ENCODE measurements at regions of chr18 and their contacts with region 1.

Region 1: GRCh38 chr18:9961041-9961440 is 47.2 kb downstream of the VAPA start:
- DNase-seq: no peak
- H3K4me3 ChIP-seq: no peak overlapping the region
- H3K4me3 Mint-ChIP-seq: no peak overlapping the region
- H3K27ac ChIP-seq: no peak overlapping the region
- H3K27ac Mint-ChIP-seq: no peak overlapping the region
- H3K4me1 ChIP-seq: peaks cover 4% of the 10 kb centered on the region in 2 donors
- H3K4me1 Mint-ChIP-seq: peaks cover 10% of the 10 kb centered on the region
- H3K27me3 ChIP-seq: peaks cover 0 to 7% of the 10 kb centered on the region in 2 donors
- H3K27me3 Mint-ChIP-seq: peaks cover 7 to 11% (median 10%) of the 10 kb centered on the region in 3 donors
- CTCF ChIP-seq: no peak

Region 2: GRCh38 chr18:9914584-9915290 is 46.3 kb before region 1 on chr18:
- intact Hi-C with region 1: no loop called
- DNase-seq: peak; percentile 81 to 94 (median 87)
- H3K4me3 ChIP-seq: peak overlapping the region; percentile 87 to 98 (median 95)
- H3K4me3 Mint-ChIP-seq: peak overlapping the region; percentile 83 to 90
- H3K27ac ChIP-seq: peak overlapping the region; percentile 80 to 97
- H3K27ac Mint-ChIP-seq: peak overlapping the region; percentile 84 to 93 (median 92)
- H3K4me1 ChIP-seq: peaks cover 41 to 71% of the 10 kb centered on the region in 2 donors
- H3K4me1 Mint-ChIP-seq: peaks cover 39% of the 10 kb centered on the region
- H3K27me3 ChIP-seq: no peaks in the 10 kb centered on the region
- H3K27me3 Mint-ChIP-seq: no peaks in the 10 kb centered on the region
- CTCF ChIP-seq: no peak

Region 3: GRCh38 chr18:10153924-10154752 is 193.1 kb after region 1 on chr18:
- intact Hi-C with region 1: no loop called
- DNase-seq: no peak
- H3K4me3 ChIP-seq: no peak overlapping the region
- H3K4me3 Mint-ChIP-seq: no peak overlapping the region
- H3K27ac ChIP-seq: no peak overlapping the region
- H3K27ac Mint-ChIP-seq: no peak overlapping the region
- H3K4me1 ChIP-seq: no peaks in the 10 kb centered on the region
- H3K4me1 Mint-ChIP-seq: peaks cover 11% of the 10 kb centered on the region
- H3K27me3 ChIP-seq: no peaks in the 10 kb centered on the region
- H3K27me3 Mint-ChIP-seq: peaks cover 0 to 1% (median 1%) of the 10 kb centered on the region in 3 donors
- CTCF ChIP-seq: no peak

Region 4: GRCh38 chr18:11040823-11041656 is 1080.0 kb after region 1 on chr18:
- intact Hi-C with region 1: loop called in 1 of 2 experiments (anchors 10 kb)
- DNase-seq: peak; percentile 2 to 33 (median 31)
- H3K4me3 ChIP-seq: no peak overlapping the region
- H3K4me3 Mint-ChIP-seq: no peak overlapping the region
- H3K27ac ChIP-seq: no peak overlapping the region
- H3K27ac Mint-ChIP-seq: no peak overlapping the region
- H3K4me1 ChIP-seq: no peaks in the 10 kb centered on the region
- H3K4me1 Mint-ChIP-seq: no peaks in the 10 kb centered on the region
- H3K27me3 ChIP-seq: no peaks in the 10 kb centered on the region
- H3K27me3 Mint-ChIP-seq: peaks cover 0 to 4% (median 3%) of the 10 kb centered on the region in 3 donors
- CTCF ChIP-seq: peak; percentile 72